BJ (cell line): ENCODE measurements at regions of chr6 and their contacts with region 1.

Region 1: GRCh38 chr6:73388800-73389512 is 5.7 kb upstream of the DDX43 start:
- DNase-seq: peak; percentile 15
- H3K4me3 ChIP-seq: peak overlapping the region; percentile 44
- H3K27me3 ChIP-seq: no peaks in the 10 kb centered on the region
- CTCF ChIP-seq: peak; percentile 85

Region 2: DNA sequence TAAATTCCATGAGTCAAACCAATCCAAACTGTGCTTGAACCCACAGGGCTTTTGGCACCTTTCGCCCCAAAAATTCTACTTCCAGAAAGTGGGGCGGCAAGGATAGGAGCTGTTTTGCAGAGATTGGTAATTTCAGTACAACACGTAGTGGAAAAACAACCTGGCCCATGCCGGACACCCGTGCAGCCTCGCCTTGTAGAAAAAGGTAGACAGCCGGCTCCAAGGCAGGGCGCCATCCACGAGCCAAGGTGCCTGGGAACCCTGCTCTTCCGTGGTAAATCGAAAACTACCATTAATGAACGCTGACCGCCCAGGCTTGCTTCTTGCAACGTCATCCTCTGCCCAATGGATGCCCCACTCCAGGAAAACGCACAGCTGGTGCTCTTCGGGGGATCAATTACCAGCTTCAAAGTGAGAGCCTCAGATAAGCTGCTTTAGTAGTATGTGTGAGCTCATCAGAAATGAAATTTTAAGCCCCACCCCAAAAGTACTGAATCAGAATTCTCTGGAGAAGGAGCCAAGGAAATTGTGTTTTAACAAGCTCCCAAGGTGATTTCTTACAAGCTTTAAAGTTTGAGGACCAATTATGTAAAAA is 21.1 kb before region 1 on chr6:
- CTCF ChIA-PET with region 1: interaction called, 10 read pairs
- POLR2A ChIA-PET with region 1: no interaction called
- DNase-seq: no peak
- H3K4me3 ChIP-seq: no peak overlapping the region
- H3K27me3 ChIP-seq: peaks cover 2% of the 10 kb centered on the region; the same call in 1 of the 2 replicates
- CTCF ChIP-seq: no peak

Region 3: GRCh38 chr6:73377225-73377624 is 11.7 kb before region 1 on chr6:
- CTCF ChIA-PET with region 1: interaction called, 18 read pairs
- POLR2A ChIA-PET with region 1: no interaction called
- DNase-seq: no peak
- H3K4me3 ChIP-seq: no peak overlapping the region
- H3K27me3 ChIP-seq: no peaks in the 10 kb centered on the region
- CTCF ChIP-seq: no peak